Sciatic nerve (tissue), 2 donors: ENCODE measurements at regions of chr17 and their contacts with region 1.

Region 1: GRCh38 chr17:7021993-7022778 is 664 bp upstream of the BCL6B start:
- DNase-seq: peak; percentile 85
- ATAC-seq: peak; percentile 63

Region 2: DNA sequence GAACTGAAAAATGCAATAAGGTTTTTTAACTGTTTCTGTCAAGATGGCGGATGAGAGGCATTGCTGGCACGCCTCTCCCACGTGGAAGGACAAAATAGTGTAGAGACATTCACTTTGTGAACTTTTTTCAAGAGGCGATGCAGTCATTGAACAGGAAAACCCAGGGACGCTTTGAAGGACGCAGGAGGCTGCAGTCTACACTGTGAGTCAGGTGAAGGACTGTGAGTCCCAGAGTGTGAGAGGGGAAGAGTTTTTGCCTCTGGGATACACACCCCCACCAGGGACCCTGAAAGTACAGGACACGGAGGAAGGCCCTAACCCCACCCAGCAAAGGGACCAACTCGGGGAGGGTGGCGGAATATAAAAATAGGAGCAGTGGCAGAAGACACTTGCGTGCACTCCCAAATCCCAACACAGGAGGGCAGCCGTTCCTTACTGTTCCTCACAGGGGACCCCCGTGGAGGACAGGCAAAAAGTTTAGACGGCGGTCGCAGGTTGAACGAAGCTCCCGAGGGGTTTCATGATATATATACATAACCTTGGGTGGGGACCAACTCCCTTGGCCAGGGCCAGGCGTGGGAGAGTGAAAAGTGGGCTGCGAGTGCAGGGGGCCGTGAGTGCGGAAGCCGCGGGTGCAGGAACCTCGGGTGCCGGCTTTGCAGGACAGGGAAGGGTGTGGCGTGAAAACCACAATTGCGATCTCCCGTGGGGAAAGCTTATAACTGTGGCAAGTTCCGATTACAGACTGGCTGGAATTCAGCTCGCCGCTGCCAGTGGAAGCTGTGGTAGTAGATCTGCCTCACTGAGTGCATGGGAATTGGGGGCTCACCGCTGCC is 108.4 kb before region 1 on chr17:
- intact Hi-C with region 1: loop called (anchors 5 kb)
- DNase-seq: peak; percentile 90
- ATAC-seq: peak; percentile 86

Region 3: DNA sequence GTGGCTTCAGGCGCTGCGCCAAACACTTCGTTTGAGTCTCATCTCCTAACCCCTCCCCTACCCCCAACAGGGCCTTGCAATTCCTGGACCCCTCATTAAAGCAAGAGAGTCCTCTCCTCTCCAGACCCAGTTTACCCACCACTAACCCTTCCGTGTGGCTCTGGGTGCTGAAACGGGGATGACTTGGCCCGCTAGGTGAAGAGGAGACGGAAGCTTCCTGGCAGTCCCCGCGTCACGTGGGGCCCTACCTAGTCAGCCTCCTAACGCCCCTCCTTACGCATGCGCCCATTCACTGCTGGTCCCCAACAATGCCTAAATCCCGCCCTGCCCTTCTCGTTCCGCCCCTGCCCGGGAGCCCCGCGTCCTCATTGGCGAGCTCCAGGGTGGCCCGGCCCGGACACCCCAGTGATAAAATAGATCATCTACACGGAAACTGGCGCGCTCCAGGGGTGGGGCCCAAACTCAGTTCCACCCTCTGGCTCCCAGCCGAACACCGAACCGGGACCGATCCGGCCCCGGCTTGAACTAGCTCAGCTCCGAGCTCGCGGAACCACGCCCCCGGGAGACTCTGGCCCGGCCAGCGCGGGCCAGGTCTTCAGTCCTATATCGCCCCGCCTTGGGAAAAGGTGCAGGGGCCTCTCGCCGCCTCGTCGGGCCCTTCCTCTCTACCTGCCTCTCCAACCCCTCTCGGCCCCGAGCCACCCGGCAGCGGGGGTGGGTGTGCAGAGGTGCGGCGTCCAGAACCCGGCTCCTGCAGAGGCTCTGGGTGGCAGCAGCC is 13.6 kb after region 1 on chr17 and contains the start of gene SLC16A13:
- intact Hi-C with region 1: no loop called
- DNase-seq: peak; percentile 90
- ATAC-seq: peak; percentile 97
- total RNA-seq, gene SLC16A13: 1.8 TPM